Activated CD4-positive, alpha-beta T cell treated with anti-CD3 and anti-CD28 coated beads for 36 hours (primary cell): ENCODE measurements at regions of chr3 and their contacts with region 1.

Region 1: GRCh38 chr3:58463181-58463941 is 28.5 kb upstream of the KCTD6 start:
- DNase-seq: peak; percentile 91
- ATAC-seq: peak; percentile 97
- H3K4me3 Mint-ChIP-seq: no peak overlapping the region
- H3K27ac Mint-ChIP-seq: peak overlapping the region; percentile 25
- H3K4me1 Mint-ChIP-seq: peaks cover 14% of the 10 kb centered on the region
- H3K27me3 Mint-ChIP-seq: no peaks in the 10 kb centered on the region

Region 2: GRCh38 chr3:58532794-58533220 is 69.4 kb after region 1 on chr3:
- CTCF ChIA-PET with region 1: interaction called, 6 read pairs
- POLR2A ChIA-PET with region 1: no interaction called
- intact Hi-C with region 1: loop called (anchors 1 kb)
- DNase-seq: peak; percentile 92
- ATAC-seq: peak; percentile 97
- H3K4me3 Mint-ChIP-seq: no peak overlapping the region
- H3K27ac Mint-ChIP-seq: peak overlapping the region; percentile 67
- H3K4me1 Mint-ChIP-seq: peaks cover 13% of the 10 kb centered on the region
- H3K27me3 Mint-ChIP-seq: no peaks in the 10 kb centered on the region